Ascending aorta (tissue), 2 donors: ENCODE measurements at regions of chr1 and their contacts with region 1.

Region 1: DNA sequence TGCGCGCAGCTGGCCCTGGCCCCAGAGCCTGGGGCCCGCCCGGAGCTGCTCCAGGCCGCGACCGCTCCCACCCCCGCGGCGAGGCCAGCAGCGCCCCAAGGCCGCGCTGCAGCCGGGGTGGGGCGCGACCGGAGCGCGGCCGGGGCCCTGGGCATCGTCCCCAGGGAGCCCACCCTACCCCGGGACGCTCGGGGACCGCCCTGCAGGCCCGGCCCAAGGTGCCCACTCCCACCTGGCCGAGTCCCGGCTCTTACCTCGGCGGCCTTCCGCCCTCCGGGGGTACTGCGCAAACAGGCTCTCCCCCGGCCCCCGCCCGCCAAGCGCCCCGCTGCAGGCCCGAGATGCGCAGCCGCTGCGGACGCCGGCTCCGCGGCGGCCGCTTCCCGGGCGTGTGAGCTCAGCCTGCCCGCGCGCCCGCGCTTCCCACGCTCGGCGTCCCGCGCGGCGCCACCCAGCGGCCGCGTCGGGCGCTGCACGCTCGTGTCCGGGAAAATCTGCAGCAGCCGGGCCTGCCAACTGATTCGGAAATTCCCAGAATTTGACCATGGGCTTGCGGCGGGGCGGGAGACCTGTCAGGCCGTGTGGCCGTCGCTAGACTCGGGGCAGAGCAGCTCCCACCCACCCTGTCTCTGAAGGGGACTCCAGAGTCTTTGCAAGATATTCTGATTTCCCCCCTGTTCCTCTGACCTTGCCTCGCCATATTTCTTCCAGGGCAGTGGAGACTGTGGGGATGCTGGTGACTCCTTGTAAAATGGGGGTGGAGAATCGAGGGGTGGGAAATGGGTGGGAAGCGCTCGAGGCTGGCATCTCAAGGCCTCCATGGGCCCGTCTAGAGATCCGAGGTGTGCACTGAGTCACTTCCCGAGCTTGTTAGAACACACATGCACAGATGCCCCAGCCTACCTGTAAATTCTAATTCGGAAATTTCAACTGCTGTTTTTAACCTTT is 41.9 kb downstream of the CD34 start:
- DNase-seq: peak in 1 of 2 donors; percentile 90
- H3K4me3 ChIP-seq: peak overlapping the region; percentile 86 to 98
- H3K27ac ChIP-seq: peak overlapping the region; percentile 88 to 98
- H3K4me1 ChIP-seq: peaks cover 16 to 36% of the 10 kb centered on the region in 2 donors
- H3K27me3 ChIP-seq: no peaks in the 10 kb centered on the region
- CTCF ChIP-seq: peak; percentile 65 to 99 (median 73)

Region 2: DNA sequence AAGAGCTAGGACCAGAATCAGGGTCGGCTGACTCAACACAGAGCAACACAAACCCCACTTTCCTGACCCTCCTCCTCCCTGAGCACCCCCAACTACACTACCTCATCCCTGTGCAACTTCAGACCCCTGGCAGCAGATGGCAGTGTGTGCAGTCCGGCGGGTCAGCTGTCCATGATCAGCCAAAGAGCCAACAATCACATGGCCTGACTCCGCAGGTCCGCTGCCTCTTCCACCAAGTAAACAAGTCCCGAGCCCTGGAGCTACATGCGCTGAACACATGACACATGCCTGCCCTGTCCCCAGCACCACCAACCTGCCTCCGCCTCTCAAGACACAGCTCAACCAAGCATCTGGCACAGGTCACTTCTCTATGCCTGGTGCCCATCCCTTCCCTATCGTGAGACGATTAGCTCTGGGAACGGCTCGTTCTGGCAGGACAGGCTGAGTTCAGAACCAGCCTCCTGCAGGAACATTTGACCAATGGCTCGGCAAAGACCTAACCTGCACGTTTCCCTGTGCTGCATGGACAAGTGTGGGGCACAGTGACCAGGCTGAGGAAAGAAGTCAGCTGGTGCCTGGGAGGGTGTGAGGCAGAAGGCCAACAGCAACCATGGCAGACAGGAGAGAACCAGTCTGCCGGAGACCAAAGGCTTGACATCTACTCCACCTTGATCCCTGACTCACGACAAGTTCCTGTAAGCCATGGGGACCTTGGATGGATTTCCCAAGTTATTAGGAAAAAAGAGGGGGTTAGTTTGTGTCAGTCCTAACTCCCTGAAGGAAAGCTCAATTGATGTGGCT is 56.9 kb before region 1 on chr1:
- intact Hi-C with region 1: loop called (anchors 10 kb)
- DNase-seq: peak in 1 of 2 donors; percentile 85
- H3K4me3 ChIP-seq: peak overlapping the region; percentile 20 to 79
- H3K27ac ChIP-seq: peak overlapping the region; percentile 95 to 98
- H3K4me1 ChIP-seq: peaks cover 58 to 97% of the 10 kb centered on the region in 2 donors
- H3K27me3 ChIP-seq: no peaks in the 10 kb centered on the region
- CTCF ChIP-seq: peak; percentile 26 to 60 (median 41)

Region 3: DNA sequence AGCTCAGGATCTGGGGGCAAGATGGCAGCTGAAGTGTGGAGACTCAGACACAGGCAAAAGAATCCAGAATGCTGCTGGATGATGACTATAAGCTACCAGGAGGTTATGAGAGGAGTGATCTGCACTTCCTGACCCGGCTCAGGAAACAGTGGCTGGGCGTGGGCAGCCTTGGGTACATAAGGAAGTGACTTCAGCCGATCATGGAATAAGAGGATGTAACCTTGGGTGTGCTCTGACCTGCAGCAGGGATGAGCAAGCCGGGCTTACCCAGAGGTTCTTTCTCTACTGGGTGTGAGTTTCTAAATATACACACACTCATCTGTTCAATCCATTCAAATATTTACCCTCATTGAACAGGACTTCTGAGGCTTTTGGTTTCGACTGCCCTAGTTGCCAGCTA is 20.8 kb before region 1 on chr1:
- intact Hi-C with region 1: loop called (anchors 1 kb)
- DNase-seq: peak; percentile 53 to 84
- H3K4me3 ChIP-seq: no peak overlapping the region
- H3K27ac ChIP-seq: peak overlapping the region; percentile 64 to 82
- H3K4me1 ChIP-seq: peaks cover 20 to 72% of the 10 kb centered on the region in 2 donors
- H3K27me3 ChIP-seq: no peaks in the 10 kb centered on the region
- CTCF ChIP-seq: no peak

Region 4: DNA sequence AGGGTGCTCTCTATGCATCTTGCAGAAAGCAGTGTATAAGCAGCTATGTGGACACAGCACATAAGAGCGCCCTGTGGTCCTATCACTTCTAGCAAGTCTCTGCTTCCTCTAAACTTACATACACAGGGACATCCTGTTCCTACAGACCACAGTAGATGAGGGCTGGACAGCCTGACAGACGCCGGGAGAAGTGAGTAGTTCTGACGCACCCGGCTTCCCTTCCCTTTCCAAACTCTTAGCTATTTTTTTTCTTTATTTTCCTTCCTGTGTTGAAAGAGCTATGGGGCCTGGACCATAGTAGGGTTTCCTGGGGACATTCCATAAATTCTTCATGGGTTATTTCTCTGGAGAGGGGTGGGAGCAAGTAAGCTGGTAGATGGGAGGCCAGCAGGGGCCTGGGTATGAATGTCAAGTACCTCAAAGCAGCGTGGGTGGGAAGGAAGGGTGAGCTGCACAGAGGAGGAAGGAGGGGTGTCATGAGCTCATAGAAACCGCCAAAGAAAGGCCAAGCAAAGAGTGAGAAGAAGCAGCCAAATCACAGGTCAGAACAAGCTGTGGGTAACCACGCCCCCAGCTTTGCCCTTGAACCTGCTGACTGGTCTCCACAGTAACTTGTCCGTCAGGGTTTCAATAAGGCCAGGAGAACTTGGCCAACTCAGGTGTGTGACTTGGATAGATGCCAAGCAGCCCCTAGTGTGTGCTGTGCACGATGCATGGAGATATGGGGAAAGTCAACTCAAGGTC is 338.5 kb after region 1 on chr1:
- intact Hi-C with region 1: loop called (anchors 5 kb)
- DNase-seq: peak; percentile 55 to 90
- H3K4me3 ChIP-seq: no peak overlapping the region
- H3K27ac ChIP-seq: peak overlapping the region; percentile 59 to 92
- H3K4me1 ChIP-seq: peaks cover 23 to 57% of the 10 kb centered on the region in 2 donors
- H3K27me3 ChIP-seq: no peaks in the 10 kb centered on the region
- CTCF ChIP-seq: no peak

Region 5: DNA sequence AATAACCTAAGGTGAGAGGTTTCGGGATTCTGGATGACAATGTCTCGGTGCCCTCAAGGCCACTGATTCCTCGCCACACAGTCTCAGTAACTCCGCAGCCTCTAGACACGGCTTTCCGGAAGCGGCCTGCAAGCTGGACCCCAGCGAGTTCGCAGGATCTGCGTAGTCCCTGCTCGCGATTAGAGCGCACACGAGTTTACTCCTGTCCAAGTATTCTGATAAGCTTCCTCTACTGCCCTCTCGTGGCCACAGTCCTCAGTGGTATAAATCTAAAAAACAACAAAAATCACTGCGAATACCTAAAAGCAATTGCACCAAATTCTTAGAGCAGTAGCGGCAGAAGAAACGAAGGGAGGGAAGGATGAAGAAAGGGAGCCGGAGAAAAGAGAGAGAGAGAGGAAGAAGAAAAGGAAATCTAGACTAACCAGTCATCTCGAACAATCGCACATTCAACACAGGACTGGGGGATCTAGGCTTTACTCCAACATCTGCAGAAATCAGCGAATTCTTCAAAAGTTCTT is 376.2 kb after region 1 on chr1:
- intact Hi-C with region 1: loop called (anchors 5 kb)
- DNase-seq: peak; percentile 62 to 98
- H3K4me3 ChIP-seq: peak overlapping the region; percentile 75 to 96
- H3K27ac ChIP-seq: peak overlapping the region; percentile 91 to 95
- H3K4me1 ChIP-seq: peaks cover 4 to 24% of the 10 kb centered on the region in 2 donors
- H3K27me3 ChIP-seq: no peaks in the 10 kb centered on the region
- CTCF ChIP-seq: peak; percentile 67 to 91 (median 83)